Sigmoid colon (tissue), 7 donors: ENCODE measurements at regions of chr6 and their contacts with region 1.

Region 1: DNA sequence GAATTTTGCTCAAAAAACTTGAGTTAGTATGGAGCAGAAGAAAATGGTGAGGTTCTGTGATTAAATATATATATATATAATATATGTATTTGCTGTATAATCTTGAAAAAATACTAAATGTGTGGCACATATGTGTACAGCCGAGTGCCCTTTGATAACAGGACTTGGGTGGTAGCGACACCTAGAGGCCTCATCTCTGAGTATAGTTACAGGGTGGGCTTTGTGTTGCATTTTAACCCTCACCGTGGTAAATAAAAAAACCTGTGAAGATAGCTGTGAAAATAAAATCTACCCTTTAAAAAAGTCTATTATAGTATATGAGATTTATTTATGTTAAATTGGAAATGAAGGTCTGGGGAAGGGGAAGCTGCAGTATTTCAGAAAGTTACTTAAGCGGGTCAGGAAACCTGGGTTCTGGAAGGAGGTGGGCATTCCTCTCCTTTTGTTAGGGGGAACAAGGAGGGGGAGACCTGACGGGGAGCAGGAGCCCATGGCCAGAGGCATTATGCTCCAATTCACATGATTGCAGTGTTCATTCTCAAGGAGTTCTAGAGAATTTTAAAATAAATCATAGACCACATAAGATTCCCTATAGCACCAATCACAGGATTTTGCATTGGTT is 82.7 kb downstream of the SH3BGRL2 start:
- DNase-seq: no peak
- H3K4me3 ChIP-seq: no peak overlapping the region
- H3K27ac ChIP-seq: no peak overlapping the region
- H3K4me1 ChIP-seq: no peaks in the 10 kb centered on the region
- H3K27me3 ChIP-seq: peaks cover 0 to 6% (median 0%) of the 10 kb centered on the region in 3 donors
- CTCF ChIP-seq: peak in 2 of 4 experiments; percentile 13 to 54
- EP300 ChIP-seq: no peak
- POLR2A ChIP-seq: no peak

Region 2: DNA sequence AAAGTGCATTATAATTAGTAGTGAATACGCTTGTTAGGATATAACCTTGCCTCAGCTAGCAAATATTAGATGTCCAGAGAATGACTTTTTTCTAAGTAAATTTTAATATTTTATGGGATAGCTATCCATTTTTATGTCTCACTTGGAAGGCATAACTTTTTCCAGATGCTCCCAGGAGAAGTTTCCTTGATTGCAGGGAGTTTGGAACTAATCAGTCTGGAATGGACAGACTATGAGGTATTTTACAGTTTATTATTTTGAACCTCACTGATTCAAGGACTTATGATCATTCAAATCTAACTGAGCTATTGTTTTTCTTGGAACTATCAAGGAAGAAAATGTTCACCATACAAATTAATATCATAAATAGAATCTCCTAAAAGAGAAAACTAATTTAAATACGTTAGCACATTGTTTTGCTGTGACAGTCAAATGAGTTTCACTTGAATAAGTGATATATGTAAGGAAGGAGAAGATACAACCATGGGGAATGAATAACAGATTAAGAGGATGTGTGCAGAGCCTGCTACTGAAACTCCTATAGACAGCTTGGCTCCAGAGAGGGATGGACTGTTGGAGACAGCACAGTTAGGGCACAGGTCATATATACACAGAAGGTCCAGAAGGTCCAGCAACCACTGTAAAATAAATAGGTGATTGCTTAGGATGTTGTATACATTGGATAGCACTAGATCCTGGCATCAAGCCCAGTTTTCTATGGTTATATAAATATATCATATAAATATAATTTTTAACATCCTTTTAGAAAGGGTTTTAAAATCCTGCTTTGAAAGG is 155.9 kb before region 1 on chr6:
- intact Hi-C with region 1: no loop called
- DNase-seq: no peak
- H3K4me3 ChIP-seq: no peak overlapping the region
- H3K27ac ChIP-seq: no peak overlapping the region
- H3K4me1 ChIP-seq: no peaks in the 10 kb centered on the region
- H3K27me3 ChIP-seq: no peaks in the 10 kb centered on the region
- CTCF ChIP-seq: no peak
- EP300 ChIP-seq: no peak
- POLR2A ChIP-seq: no peak

Region 3: GRCh38 chr6:79570129-79571029 is 143.4 kb before region 1 on chr6:
- intact Hi-C with region 1: loop called (anchors 5 kb)
- DNase-seq: no peak
- H3K4me3 ChIP-seq: peak overlapping the region in 3 of 4 donors; percentile 30 to 36 (median 35)
- H3K27ac ChIP-seq: peak overlapping the region in 1 of 4 donors; percentile 6
- H3K4me1 ChIP-seq: peaks cover 0 to 15% (median 8%) of the 10 kb centered on the region in 4 donors
- H3K27me3 ChIP-seq: no peaks in the 10 kb centered on the region
- CTCF ChIP-seq: peak; percentile 7 to 60 (median 55)
- EP300 ChIP-seq: no peak
- POLR2A ChIP-seq: no peak